Dendritic cell treated with granulocyte-macrophage colony-stimulating factor and Interleukin-4, amounts not matched to agents 40 ng/mL and 50 ng/mL, for 4 days (primary cell): ENCODE measurements at regions of chr14 and their contacts with region 1.

Region 1: GRCh38 chr14:50860478-50861086 is 11.3 kb upstream of the ABHD12B start:
- H3K4me3 Mint-ChIP-seq: peak overlapping the region; percentile 84
- H3K27ac Mint-ChIP-seq: peak overlapping the region; percentile 78
- H3K4me1 Mint-ChIP-seq: peaks cover 12% of the 10 kb centered on the region
- H3K27me3 Mint-ChIP-seq: peaks cover 2% of the 10 kb centered on the region

Region 2: DNA sequence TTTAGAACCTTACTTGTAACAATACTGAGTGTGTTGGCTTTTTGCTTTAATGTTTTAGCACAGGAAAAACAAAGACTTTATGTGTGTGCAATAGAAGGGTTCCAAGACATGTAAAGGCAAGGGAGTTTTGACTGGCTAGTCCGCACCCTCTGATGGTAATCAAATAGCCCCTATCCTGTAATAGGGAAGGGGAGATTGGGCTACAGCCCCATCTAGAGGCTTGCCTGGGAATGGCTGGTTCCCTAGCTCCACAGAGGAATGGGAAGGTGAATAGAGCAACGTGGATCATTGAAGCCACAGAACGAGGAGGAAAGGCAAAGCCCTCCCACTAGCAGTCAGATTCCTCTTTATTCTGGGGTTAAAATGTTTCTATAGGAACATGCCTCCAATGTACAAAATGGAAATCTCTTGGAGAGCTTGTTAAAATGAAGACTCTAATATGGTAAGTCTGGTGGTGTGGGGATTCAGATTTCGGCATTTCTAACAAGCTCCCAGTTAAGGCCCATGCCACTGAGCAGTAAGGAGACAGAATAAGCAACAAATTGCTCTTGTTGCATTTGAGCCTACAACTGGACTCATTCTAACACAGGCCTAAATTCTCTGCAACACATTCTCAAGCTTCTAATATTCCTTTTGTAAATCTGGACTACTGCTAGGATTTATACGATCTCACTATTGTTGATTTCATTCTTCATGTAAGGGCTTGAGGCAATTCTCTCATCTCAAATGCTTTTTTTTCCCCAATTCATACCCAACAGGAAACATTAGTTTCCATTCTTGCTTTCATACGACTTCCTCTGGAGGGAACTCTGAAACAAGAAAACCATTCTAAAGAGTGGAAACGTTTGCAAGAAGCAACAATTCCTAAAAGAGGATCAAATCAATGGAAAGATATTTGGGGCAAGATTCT is 86.7 kb before region 1 on chr14:
- intact Hi-C with region 1: loop called (anchors 5 kb)
- H3K4me3 Mint-ChIP-seq: no peak overlapping the region
- H3K27ac Mint-ChIP-seq: no peak overlapping the region
- H3K4me1 Mint-ChIP-seq: peaks cover 1% of the 10 kb centered on the region
- H3K27me3 Mint-ChIP-seq: no peaks in the 10 kb centered on the region

Region 3: DNA sequence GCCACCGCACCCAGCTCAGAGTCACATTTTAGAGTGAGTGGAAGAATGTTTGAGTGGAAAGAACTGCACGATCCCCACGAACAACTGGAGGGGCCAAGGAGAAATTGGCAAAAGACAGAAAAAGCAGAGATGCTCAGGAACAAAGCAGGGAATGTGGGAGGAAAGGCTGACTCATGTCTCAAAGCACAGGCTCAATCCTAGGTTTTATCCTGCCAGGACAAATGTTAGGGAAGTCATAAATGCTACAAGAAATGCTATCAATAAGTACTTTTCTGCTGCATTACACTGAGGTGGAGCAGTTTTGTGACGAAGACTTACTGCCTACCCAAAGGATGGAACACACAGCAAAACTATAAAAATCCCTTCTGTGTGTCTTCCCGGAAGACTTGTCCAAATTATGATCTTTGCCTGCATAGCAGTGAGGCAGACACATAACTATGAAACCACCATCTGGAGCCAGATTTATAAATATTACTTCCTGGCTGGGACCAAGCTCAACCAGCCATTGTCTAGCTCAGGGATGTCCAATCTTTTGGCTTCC is 56.3 kb before region 1 on chr14:
- intact Hi-C with region 1: loop called (anchors 5 kb)
- H3K4me3 Mint-ChIP-seq: no peak overlapping the region
- H3K27ac Mint-ChIP-seq: no peak overlapping the region
- H3K4me1 Mint-ChIP-seq: no peaks in the 10 kb centered on the region
- H3K27me3 Mint-ChIP-seq: no peaks in the 10 kb centered on the region

Region 4: DNA sequence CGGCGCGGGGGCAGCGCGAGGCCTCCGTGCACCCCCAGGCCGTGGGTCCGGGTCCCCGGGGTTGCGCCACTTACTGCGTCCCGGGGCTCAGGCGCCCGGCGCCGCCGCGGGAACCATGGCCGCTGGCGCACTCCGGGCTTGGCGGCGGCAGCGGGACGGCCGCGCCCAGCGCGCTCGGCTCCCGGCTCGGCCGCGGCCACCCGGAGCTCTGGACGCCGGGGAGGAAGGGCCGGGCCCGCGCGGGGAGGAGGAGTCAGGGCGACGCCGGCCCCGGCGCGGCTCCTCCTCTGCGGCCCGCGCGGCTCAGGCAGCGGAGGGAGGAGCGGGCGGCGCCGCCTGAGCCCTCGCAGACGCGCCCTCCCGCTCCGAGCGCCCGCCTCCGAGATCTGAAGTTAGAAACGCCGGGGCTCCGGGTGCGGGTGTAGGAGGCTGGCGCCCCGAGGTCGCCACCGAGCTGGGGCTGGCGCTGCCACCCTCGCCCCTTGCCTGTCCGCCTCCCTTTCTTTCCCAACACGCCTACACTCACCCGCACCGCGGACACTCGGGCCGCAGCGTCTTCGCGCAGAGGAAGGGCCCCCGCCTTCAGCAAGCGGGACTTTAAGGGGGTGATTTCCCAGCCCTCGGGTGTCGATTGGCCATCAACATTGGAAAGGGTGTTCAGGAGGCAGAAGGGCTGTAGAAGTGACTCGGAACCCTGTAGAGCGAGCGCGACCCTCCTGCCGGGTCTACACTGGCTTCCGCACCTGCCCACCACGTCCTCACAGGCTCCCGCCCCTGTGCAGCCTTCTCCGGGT is 29.5 kb before region 1 on chr14 and contains the start of gene NIN:
- intact Hi-C with region 1: loop called (anchors 2 kb)
- H3K4me3 Mint-ChIP-seq: peak within 1 kb of the TSS; percentile 87
- H3K27ac Mint-ChIP-seq: peak within 1 kb of the TSS; percentile 93
- H3K4me1 Mint-ChIP-seq: peaks cover 53% of the 10 kb centered on the region
- H3K27me3 Mint-ChIP-seq: peaks cover 7% of the 10 kb centered on the region